CD8-positive, alpha-beta T cell (primary cell): ENCODE measurements at regions of chrX and their contacts with region 1.

Region 1: DNA sequence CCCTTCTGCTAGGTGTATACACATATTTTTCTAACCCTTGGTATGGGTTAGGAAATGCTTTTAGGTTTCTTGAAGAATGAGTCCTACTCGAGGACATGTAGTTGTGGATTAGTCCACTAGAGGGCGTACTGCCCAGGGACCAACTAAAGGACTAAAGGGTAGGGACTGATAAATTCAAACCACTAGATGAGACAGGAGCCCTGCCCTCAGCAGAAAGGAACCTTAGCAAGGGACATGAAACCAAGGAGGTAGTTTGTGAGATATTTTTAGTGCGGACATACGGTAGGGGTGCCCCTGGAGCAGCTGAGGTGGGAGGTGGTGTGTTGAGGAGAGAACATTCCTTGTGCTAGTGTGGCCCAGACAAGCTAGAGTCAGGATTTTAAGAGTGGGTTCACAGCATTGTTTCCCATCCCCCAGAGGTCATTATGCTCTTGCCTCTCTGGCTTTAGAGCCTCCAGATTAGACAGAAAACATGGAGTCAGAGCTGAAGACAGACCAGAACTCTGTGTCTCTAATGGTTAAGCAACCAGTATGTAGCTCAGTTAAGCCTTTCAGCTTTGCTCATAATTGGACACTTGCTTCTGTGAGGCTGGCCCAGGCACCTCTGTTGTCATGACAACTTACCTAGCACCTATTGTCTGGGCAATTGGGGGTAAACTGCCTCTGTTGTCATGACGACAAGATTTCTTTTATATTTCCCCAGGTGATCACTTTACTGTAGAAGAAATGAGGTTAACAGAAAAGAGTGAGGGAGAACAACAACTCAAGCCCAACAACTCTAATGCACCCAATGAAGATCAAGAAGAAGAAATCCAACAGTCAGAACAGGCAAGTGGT is 1.0 kb downstream of the TMEM31 start:
- DNase-seq: peak in 8 of 9 experiments; percentile 4 to 62 (median 41)
- ATAC-seq: peak; percentile 54
- H3K4me3 ChIP-seq: no peak overlapping the region
- H3K4me3 Mint-ChIP-seq: no peak overlapping the region
- H3K27ac ChIP-seq: no peak overlapping the region
- H3K27ac Mint-ChIP-seq: no peak overlapping the region
- H3K4me1 ChIP-seq: no peaks in the 10 kb centered on the region
- H3K4me1 Mint-ChIP-seq: no peaks in the 10 kb centered on the region
- H3K27me3 ChIP-seq: no peaks in the 10 kb centered on the region
- H3K27me3 Mint-ChIP-seq: peaks cover 3% of the 10 kb centered on the region
- CTCF ChIP-seq: peak; percentile 44

Region 2: GRCh38 chrX:103533511-103534216 is 178.1 kb before region 1 on chrX:
- CTCF ChIA-PET with region 1: no interaction called
- POLR2A ChIA-PET with region 1: no interaction called
- intact Hi-C with region 1: loop called (anchors 2 kb)
- DNase-seq: peak; percentile 38 to 78 (median 65)
- ATAC-seq: peak; percentile 69
- H3K4me3 ChIP-seq: peak overlapping the region in 1 of 2 experiments; percentile 4
- H3K4me3 Mint-ChIP-seq: peak overlapping the region; percentile 75
- H3K27ac ChIP-seq: no peak overlapping the region
- H3K27ac Mint-ChIP-seq: no peak overlapping the region
- H3K4me1 ChIP-seq: no peaks in the 10 kb centered on the region
- H3K4me1 Mint-ChIP-seq: peaks cover 3% of the 10 kb centered on the region
- H3K27me3 ChIP-seq: no peaks in the 10 kb centered on the region
- H3K27me3 Mint-ChIP-seq: peaks cover 2% of the 10 kb centered on the region
- CTCF ChIP-seq: peak; percentile 68

Region 3: DNA sequence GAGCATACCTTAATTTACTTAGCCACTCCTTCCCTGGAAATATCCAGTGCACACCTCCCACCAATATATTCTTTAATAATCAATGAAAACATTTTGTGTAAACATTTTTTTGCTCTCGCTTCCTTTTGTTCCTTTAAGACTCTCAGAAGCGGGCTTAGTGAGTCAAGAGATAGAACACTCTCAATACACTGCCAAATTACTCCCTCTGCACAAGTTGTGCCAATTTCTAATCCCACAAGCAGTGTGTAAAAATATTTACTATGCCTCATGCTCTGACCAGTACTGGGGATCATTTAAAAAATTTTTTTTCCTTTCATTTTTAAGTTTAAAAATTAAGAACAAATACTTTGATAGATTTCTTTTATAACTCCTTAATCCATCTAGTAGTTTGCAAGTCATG is 30.3 kb before region 1 on chrX:
- CTCF ChIA-PET with region 1: no interaction called
- POLR2A ChIA-PET with region 1: no interaction called
- intact Hi-C with region 1: no loop called
- DNase-seq: no peak
- ATAC-seq: no peak
- H3K4me3 ChIP-seq: no peak overlapping the region
- H3K4me3 Mint-ChIP-seq: no peak overlapping the region
- H3K27ac ChIP-seq: no peak overlapping the region
- H3K27ac Mint-ChIP-seq: no peak overlapping the region
- H3K4me1 ChIP-seq: peaks cover 10% of the 10 kb centered on the region
- H3K4me1 Mint-ChIP-seq: peaks cover 18% of the 10 kb centered on the region
- H3K27me3 ChIP-seq: no peaks in the 10 kb centered on the region
- H3K27me3 Mint-ChIP-seq: no peaks in the 10 kb centered on the region
- CTCF ChIP-seq: no peak

Region 4: DNA sequence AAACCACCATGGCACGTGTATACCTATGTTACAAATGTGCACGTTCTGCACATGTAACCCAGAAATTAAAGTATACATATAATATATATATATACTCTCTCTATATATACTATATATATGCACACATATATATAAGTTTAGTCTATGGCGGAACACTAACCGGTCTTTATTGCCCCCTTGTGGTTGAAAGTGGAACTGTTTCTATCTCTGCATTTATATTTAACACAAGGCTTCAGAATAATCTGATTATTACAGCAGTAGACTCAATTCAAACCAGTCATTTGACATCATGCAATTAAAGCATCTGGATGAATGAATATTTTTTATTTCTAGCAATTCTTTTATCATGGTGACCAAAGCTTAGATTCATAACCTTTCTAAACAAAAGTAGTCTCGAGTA is 105.8 kb after region 1 on chrX:
- CTCF ChIA-PET with region 1: no interaction called
- POLR2A ChIA-PET with region 1: no interaction called
- intact Hi-C with region 1: loop called in 1 of 2 experiments (anchors 5 kb)
- DNase-seq: peak in 3 of 9 experiments; percentile 40 to 66 (median 60)
- ATAC-seq: peak; percentile 64
- H3K4me3 ChIP-seq: no peak overlapping the region
- H3K4me3 Mint-ChIP-seq: no peak overlapping the region
- H3K27ac ChIP-seq: no peak overlapping the region
- H3K27ac Mint-ChIP-seq: no peak overlapping the region
- H3K4me1 ChIP-seq: no peaks in the 10 kb centered on the region
- H3K4me1 Mint-ChIP-seq: no peaks in the 10 kb centered on the region
- H3K27me3 ChIP-seq: no peaks in the 10 kb centered on the region
- H3K27me3 Mint-ChIP-seq: peaks cover 8% of the 10 kb centered on the region
- CTCF ChIP-seq: peak; percentile 58

Region 5: DNA sequence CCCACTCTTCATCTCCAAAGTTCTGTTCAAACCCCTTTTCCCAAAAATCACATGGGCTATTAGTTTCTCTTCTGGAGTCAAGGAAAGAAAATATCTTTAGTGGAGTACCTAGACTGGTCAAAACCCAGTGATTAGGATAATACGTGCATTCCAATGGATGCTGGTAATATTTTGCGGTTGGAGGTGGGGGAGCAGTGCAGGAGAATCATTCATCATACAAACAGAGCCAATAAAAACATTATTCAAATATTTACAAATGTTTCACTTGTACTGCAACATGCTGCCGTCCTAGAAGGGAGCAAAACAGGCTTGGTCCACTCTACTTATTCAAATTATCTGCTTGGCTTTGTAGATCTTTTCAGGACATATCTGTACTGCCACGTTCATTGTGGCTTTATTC is 177.5 kb after region 1 on chrX:
- CTCF ChIA-PET with region 1: no interaction called
- POLR2A ChIA-PET with region 1: no interaction called
- intact Hi-C with region 1: no loop called
- DNase-seq: no peak
- ATAC-seq: no peak
- H3K4me3 ChIP-seq: no peak overlapping the region
- H3K4me3 Mint-ChIP-seq: no peak overlapping the region
- H3K27ac ChIP-seq: no peak overlapping the region
- H3K27ac Mint-ChIP-seq: no peak overlapping the region
- H3K4me1 ChIP-seq: no peaks in the 10 kb centered on the region
- H3K4me1 Mint-ChIP-seq: no peaks in the 10 kb centered on the region
- H3K27me3 ChIP-seq: no peaks in the 10 kb centered on the region
- H3K27me3 Mint-ChIP-seq: no peaks in the 10 kb centered on the region
- CTCF ChIP-seq: no peak